Uterus (tissue), 4 donors: ENCODE measurements at regions of chr9 and their contacts with region 1.

Region 1: DNA sequence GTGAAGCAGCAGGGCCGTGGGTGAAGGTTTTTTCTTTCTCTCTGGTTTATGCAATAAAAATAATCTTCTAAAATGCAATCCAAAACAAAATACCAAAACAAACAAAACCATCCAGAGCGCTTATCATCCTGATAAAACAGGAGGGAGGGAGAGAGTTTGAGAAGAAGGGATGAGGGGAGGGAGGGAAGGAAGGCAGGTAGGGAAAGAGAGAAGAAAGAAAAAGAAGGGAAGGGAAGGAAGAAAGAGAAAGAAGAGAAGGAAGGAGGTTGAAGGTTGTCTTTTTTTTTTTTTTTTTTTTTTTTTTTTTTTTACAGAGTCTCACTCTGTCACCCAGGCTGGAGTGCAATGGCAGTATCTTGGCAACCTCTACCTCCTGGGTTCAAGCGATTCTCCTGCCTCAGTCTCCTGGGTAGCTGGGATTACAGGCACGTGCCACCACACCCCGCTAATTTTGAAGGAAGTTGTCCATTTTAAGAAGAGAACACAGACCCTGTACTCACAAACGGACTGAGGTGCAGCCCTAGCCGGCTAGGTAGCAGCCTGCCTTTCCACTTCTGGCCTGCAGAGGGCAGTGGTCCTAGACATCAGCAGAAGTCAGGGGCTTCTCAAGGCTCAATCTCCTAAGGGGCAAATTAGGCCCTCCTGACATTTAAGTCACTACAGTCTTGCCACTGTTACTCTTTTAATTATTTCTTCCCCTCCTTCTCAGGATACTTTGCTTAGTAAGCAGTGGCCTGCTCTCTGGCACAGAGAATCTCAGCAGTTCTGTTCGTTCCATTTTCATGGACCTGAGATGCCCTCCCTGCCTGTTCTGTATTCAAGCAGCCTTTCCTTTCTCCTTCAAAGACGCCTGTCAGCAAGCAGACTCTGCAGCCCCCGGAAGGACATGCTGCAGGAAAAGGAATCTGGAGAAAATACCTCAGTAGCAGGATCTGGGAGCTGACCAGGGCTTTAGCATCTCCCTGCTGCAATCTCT is 76.4 kb downstream of the EPB41L4B start:
- DNase-seq: peak; percentile 46 to 56
- H3K4me3 ChIP-seq: no peak overlapping the region
- H3K27ac ChIP-seq: no peak overlapping the region
- H3K4me1 ChIP-seq: no peaks in the 10 kb centered on the region
- H3K27me3 ChIP-seq: no peaks in the 10 kb centered on the region
- CTCF ChIP-seq: peak; percentile 67 to 81 (median 74)
- POLR2A ChIP-seq: no peak

Region 2: GRCh38 chr9:108142504-108143201 is 1101.8 kb before region 1 on chr9:
- intact Hi-C with region 1: no loop called
- DNase-seq: peak; percentile 76 to 80
- H3K4me3 ChIP-seq: no peak overlapping the region
- H3K27ac ChIP-seq: peak overlapping the region; percentile 70 to 72
- H3K4me1 ChIP-seq: no peaks in the 10 kb centered on the region
- H3K27me3 ChIP-seq: no peaks in the 10 kb centered on the region
- CTCF ChIP-seq: peak in 1 of 4 experiments; percentile 8
- POLR2A ChIP-seq: no peak

Region 3: GRCh38 chr9:109320742-109321448 is 76.5 kb after region 1 on chr9 and contains the start of gene EPB41L4B:
- intact Hi-C with region 1: loop called (anchors 5 kb)
- DNase-seq: peak; percentile 70 to 75
- H3K4me3 ChIP-seq: peak within 1 kb of the TSS in 1 of 2 donors; percentile 43
- H3K27ac ChIP-seq: no peak within 1 kb of the TSS
- H3K4me1 ChIP-seq: peaks cover 0 to 7% of the 10 kb centered on the region in 2 donors
- H3K27me3 ChIP-seq: peaks cover 0 to 4% of the 10 kb centered on the region in 2 donors
- CTCF ChIP-seq: peak; percentile 62 to 92 (median 88)
- POLR2A ChIP-seq: no peak
- total RNA-seq, gene EPB41L4B: under 0.01 to 3.9 (median 1.5) TPM